Activated CD8-positive, alpha-beta T cell treated with anti-CD3 and anti-CD28 coated beads for 36 hours (primary cell): ENCODE measurements at regions of chr3 and their contacts with region 1.

Region 1: GRCh38 chr3:120742198-120742849 is at the starts of genes GTF2E1 and RABL3:
- DNase-seq: peak; percentile 98
- ATAC-seq: peak; percentile 98
- H3K4me3 Mint-ChIP-seq: peak within 1 kb of the TSS; percentile 84
- H3K27ac Mint-ChIP-seq: peak within 1 kb of the TSS; percentile 96
- H3K4me1 Mint-ChIP-seq: peaks cover 27% of the 10 kb centered on the region
- H3K27me3 Mint-ChIP-seq: no peaks in the 10 kb centered on the region
- CTCF ChIP-seq: no peak
- total RNA-seq, gene GTF2E1: 25.2 to 25.9 TPM
- total RNA-seq, gene RABL3: 28.8 to 37.1 TPM

Region 2: GRCh38 chr3:120730576-120731542 is 11.5 kb before region 1 on chr3:
- CTCF ChIA-PET with region 1: interaction called, 12 read pairs
- POLR2A ChIA-PET with region 1: interaction called, 3 read pairs
- intact Hi-C with region 1: no loop called
- DNase-seq: no peak
- ATAC-seq: no peak
- H3K4me3 Mint-ChIP-seq: no peak overlapping the region
- H3K27ac Mint-ChIP-seq: no peak overlapping the region
- H3K4me1 Mint-ChIP-seq: no peaks in the 10 kb centered on the region
- H3K27me3 Mint-ChIP-seq: no peaks in the 10 kb centered on the region
- CTCF ChIP-seq: no peak

Region 3: GRCh38 chr3:120780977-120781376 is 38.7 kb after region 1 on chr3:
- CTCF ChIA-PET with region 1: no interaction called
- POLR2A ChIA-PET with region 1: no interaction called
- intact Hi-C with region 1: no loop called
- DNase-seq: no peak
- ATAC-seq: no peak
- H3K4me3 Mint-ChIP-seq: no peak overlapping the region
- H3K27ac Mint-ChIP-seq: no peak overlapping the region
- H3K4me1 Mint-ChIP-seq: no peaks in the 10 kb centered on the region
- H3K27me3 Mint-ChIP-seq: no peaks in the 10 kb centered on the region
- CTCF ChIP-seq: no peak